GM12878 (cell line): ENCODE measurements at regions of chr7 and their contacts with region 1.

Region 1: DNA sequence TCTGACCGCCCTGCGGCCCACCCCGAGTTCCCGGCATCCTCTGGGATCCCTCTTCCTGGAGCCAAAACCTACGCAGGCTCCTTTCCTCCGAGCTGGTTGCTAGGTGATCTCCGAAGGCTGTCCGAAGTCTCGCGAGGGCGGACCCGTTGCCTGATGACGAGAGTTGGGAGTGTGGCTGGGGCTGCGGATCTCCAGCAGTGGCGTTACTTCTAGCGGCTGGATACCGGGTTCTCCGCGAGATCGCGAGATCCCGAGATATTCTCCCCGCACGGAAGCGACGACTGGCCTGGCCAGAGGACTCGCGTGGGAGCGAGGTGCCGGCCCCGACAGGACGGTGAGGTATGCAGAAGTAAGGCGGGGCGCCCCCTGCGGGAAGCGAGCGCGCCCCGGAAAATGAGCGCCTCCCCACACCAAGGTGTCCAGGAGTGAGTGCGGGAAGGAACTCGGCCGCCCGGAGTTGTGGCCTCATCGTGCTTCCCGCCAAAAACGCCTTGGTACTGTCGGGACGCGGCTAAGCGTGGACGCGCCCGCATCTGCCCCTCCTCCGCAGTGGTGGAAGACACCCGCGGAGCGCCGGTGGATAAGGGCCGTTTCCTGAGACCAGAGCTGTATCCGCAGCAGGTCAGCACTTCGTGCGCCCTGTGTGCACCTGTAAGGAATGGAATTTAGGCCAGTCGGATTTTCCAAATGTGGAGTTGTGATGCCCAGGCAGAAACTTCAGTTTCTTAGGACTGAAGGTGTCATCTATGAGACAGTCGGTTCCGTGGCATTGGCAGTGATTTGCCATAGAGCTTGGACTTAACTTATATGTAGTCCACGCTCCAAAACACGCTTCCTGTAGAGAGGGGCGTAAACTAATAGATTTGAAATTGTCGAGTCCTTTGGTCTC is at the start of gene AGBL3:
- DNase-seq: peak; percentile 84
- ATAC-seq: peak; percentile 85
- H3K4me3 ChIP-seq: peak within 1 kb of the TSS; percentile 85
- H3K27ac ChIP-seq: peak within 1 kb of the TSS; percentile 97
- H3K4me1 ChIP-seq: peaks cover 11% of the 10 kb centered on the region
- H3K27me3 ChIP-seq: no peaks in the 10 kb centered on the region
- CTCF ChIP-seq: peak; percentile 59 to 75 (median 73)
- EP300 ChIP-seq: peak in 1 of 2 experiments; percentile 41; a peak in 1 of 4 replicates
- POLR2A ChIP-seq: peak; percentile 88
- RAD21 ChIP-seq: no peak
- polyA plus RNA-seq, gene AGBL3: 0.82 to 1.4 TPM

Region 2: GRCh38 chr7:135160098-135160857 is 173.7 kb after region 1 on chr7:
- CTCF ChIA-PET with region 1: interaction called, 28 read pairs
- POLR2A ChIA-PET with region 1: interaction called, 31 read pairs
- RAD21 ChIA-PET with region 1: interaction called, 39 read pairs
- SMC1A ChIA-PET with region 1: interaction called, 26 read pairs
- in situ Hi-C with region 1: loop called (anchors 5 kb)
- intact Hi-C with region 1: no loop called
- DNase-seq: no peak
- ATAC-seq: peak; percentile 59
- H3K4me3 ChIP-seq: no peak overlapping the region; the same call in 1 of the 2 replicates
- H3K27ac ChIP-seq: peak overlapping the region; percentile 84
- H3K4me1 ChIP-seq: peaks cover 32% of the 10 kb centered on the region
- H3K27me3 ChIP-seq: no peaks in the 10 kb centered on the region
- CTCF ChIP-seq: no peak
- EP300 ChIP-seq: peak in 1 of 2 experiments; percentile 15; a peak in 1 of 4 replicates
- POLR2A ChIP-seq: no peak; the same call in 1 of the 2 replicates
- RAD21 ChIP-seq: no peak

Region 3: DNA sequence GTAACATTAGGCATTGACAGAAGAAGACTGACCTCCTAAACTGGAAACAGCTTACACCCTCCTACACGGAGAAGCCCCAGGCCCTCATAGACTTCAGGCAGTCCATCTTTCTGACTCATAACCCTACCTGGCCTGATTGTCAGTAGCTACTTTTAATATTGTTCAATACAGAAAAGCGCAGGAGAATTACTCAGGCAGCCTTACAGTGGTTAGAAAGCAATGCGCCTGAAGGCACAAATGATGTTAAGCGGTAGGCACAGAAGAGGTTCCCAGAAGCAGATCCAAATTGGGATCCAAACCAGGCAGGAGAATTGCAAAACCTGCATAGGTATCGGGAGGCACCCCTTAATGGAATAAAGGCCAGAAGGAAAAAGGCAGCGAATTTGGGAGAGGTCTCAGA is 189.3 kb after region 1 on chr7:
- CTCF ChIA-PET with region 1: interaction called, 157 read pairs
- POLR2A ChIA-PET with region 1: interaction called, 41 read pairs
- RAD21 ChIA-PET with region 1: interaction called, 120 read pairs
- SMC1A ChIA-PET with region 1: interaction called, 97 read pairs
- in situ Hi-C with region 1: no loop called
- intact Hi-C with region 1: loop called (anchors 2 kb)
- DNase-seq: no peak
- ATAC-seq: no peak; the same call in 2 of the 3 replicates
- H3K4me3 ChIP-seq: peak overlapping the region; percentile 51
- H3K27ac ChIP-seq: no peak overlapping the region
- H3K4me1 ChIP-seq: peaks cover 5% of the 10 kb centered on the region
- H3K27me3 ChIP-seq: no peaks in the 10 kb centered on the region
- CTCF ChIP-seq: no peak
- EP300 ChIP-seq: no peak
- POLR2A ChIP-seq: no peak
- RAD21 ChIP-seq: no peak

Region 4: GRCh38 chr7:135186841-135187253 is 200.2 kb after region 1 on chr7:
- CTCF ChIA-PET with region 1: interaction called, 8 read pairs
- POLR2A ChIA-PET with region 1: interaction called, 12 read pairs
- RAD21 ChIA-PET with region 1: interaction called, 27 read pairs
- SMC1A ChIA-PET with region 1: interaction called, 19 read pairs
- in situ Hi-C with region 1: no loop called
- intact Hi-C with region 1: no loop called
- DNase-seq: no peak
- ATAC-seq: peak; percentile 77
- H3K4me3 ChIP-seq: peak overlapping the region; percentile 25; the same call in 1 of the 2 replicates
- H3K27ac ChIP-seq: peak overlapping the region; percentile 58
- H3K4me1 ChIP-seq: peaks cover 33% of the 10 kb centered on the region
- H3K27me3 ChIP-seq: no peaks in the 10 kb centered on the region
- CTCF ChIP-seq: peak in 1 of 3 experiments; percentile 24; a peak in 1 of 6 replicates
- EP300 ChIP-seq: peak; percentile 94 to 95; a peak in 3 of 4 replicates
- POLR2A ChIP-seq: peak; percentile 65
- RAD21 ChIP-seq: peak; percentile 27; the same call in 1 of the 2 replicates

Region 5: GRCh38 chr7:135211179-135211945 is 224.8 kb after region 1 on chr7 and contains the start of gene WDR91:
- CTCF ChIA-PET with region 1: interaction called, 14 read pairs
- POLR2A ChIA-PET with region 1: interaction called, 10 read pairs
- RAD21 ChIA-PET with region 1: interaction called, 52 read pairs
- SMC1A ChIA-PET with region 1: interaction called, 28 read pairs
- in situ Hi-C with region 1: no loop called
- intact Hi-C with region 1: no loop called
- DNase-seq: peak; percentile 81
- ATAC-seq: peak; percentile 83
- H3K4me3 ChIP-seq: peak within 1 kb of the TSS; percentile 99
- H3K27ac ChIP-seq: peak within 1 kb of the TSS; percentile 91
- H3K4me1 ChIP-seq: peaks cover 39% of the 10 kb centered on the region
- H3K27me3 ChIP-seq: no peaks in the 10 kb centered on the region
- CTCF ChIP-seq: no peak
- EP300 ChIP-seq: no peak
- POLR2A ChIP-seq: peak; percentile 98
- RAD21 ChIP-seq: no peak
- polyA plus RNA-seq, gene WDR91: 7.6 to 10.1 TPM

Region 6: DNA sequence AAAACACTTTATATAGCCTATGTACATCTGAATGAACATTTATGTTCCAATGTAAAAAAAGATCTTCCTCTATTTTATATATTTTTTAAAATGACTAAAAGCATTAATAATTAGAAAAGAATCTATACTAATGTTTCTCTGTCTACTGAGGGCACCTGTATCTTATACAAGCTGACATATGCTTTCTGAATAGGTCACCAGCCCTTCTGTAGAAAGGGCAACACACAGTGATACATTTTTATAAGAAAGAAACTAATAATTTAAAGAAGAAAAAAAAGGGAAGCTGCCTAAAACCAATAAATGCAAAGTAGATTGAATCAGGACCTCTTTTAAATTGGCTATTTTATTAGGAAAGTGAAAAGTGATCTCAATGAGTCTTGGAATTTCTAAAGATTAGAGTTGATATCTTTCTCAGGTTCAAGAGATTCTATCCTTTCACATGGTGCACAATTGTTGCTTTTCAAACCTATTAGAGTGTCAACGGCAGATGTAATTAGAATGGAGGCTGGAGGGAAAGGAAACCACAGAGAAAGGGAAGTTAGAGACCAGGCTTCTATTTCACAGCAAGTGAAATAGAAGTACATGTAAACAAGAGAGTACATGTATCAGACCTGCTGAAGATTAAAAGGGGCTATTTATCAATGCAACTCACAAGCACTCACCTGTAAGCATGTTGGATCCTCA is 984.2 kb after region 1 on chr7:
- CTCF ChIA-PET with region 1: no interaction called
- POLR2A ChIA-PET with region 1: no interaction called
- RAD21 ChIA-PET with region 1: no interaction called
- SMC1A ChIA-PET with region 1: no interaction called
- in situ Hi-C with region 1: loop called (anchors 25 kb)
- intact Hi-C with region 1: no loop called
- DNase-seq: peak; percentile 66
- ATAC-seq: peak; percentile 69
- H3K4me3 ChIP-seq: no peak overlapping the region
- H3K27ac ChIP-seq: peak overlapping the region; percentile 41
- H3K4me1 ChIP-seq: peaks cover 20% of the 10 kb centered on the region; the same call in 1 of the 2 replicates
- H3K27me3 ChIP-seq: no peaks in the 10 kb centered on the region
- CTCF ChIP-seq: no peak
- EP300 ChIP-seq: peak in 1 of 2 experiments; percentile 42; a peak in 1 of 4 replicates
- POLR2A ChIP-seq: no peak
- RAD21 ChIP-seq: no peak